GM12878 (cell line): ENCODE measurements at regions of chr17 and their contacts with region 1.

Region 1: DNA sequence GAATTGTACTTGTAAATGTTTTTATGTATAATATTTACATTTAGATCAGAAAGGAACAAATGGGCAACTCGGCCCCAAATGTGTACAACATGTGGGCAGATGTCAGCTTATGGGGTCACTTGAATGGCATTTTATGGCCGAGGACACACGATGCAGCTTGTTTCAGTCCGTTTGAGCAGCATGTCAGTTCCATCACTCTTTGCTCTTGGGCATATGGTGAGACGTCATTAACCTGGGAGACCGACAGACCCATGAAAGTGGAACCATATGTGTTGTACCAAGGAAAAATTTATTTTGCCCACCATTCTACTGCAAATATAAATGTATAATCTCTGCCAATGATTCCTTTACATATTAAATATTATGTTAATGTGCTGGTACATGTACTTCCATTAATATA is 561.9 kb upstream of the SOX9 start:
- DNase-seq: no peak
- ATAC-seq: no peak
- H3K4me3 ChIP-seq: no peak overlapping the region
- H3K27ac ChIP-seq: no peak overlapping the region
- H3K4me1 ChIP-seq: no peaks in the 10 kb centered on the region
- H3K27me3 ChIP-seq: no peaks in the 10 kb centered on the region
- CTCF ChIP-seq: no peak
- EP300 ChIP-seq: no peak
- POLR2A ChIP-seq: no peak
- RAD21 ChIP-seq: no peak

Region 2: GRCh38 chr17:71494062-71494855 is 64.6 kb before region 1 on chr17:
- CTCF ChIA-PET with region 1: no interaction called
- POLR2A ChIA-PET with region 1: no interaction called
- RAD21 ChIA-PET with region 1: no interaction called
- SMC1A ChIA-PET with region 1: no interaction called
- in situ Hi-C with region 1: no loop called
- intact Hi-C with region 1: loop called (anchors 10 kb)
- DNase-seq: no peak
- ATAC-seq: no peak
- H3K4me3 ChIP-seq: no peak overlapping the region
- H3K27ac ChIP-seq: no peak overlapping the region
- H3K4me1 ChIP-seq: no peaks in the 10 kb centered on the region
- H3K27me3 ChIP-seq: no peaks in the 10 kb centered on the region
- CTCF ChIP-seq: no peak
- EP300 ChIP-seq: no peak
- POLR2A ChIP-seq: no peak
- RAD21 ChIP-seq: no peak